ENCODE measurements at regions of chr13 and their contacts with region 1.

Region 1: DNA sequence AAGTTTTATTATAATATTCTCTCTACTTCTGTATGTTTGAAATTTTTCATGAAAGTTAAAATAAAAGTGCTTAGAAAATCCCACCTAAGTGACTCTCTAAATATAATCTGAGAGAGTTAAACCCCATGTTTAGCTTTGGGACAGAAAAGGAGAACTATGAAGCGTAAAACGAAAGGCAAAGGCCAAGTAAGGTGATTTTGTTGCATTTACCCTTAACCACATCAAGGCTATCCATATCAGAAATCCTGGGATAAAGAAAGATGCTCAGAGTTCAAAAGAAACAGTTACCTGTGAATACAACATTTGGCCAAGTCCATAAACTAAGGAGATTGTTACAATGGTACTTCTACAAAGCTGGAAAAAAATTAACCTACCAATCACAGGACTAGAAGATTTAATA is 31.3 kb downstream of the UBL3 start:
- DNase-seq: no peak

Region 2: GRCh38 chr13:29801737-29802305 is 17.3 kb before region 1 on chr13:
- intact Hi-C with region 1: loop called in 1 of 2 experiments (anchors 1 kb)
- DNase-seq: no peak

Measured in posterior vena cava (tissue), 2 donors.